ENCODE measurements at regions of chr3 and their contacts with region 1.

Region 1: GRCh38 chr3:57179580-57180410 is 14.6 kb upstream of the IL17RD start:
- DNase-seq: no peak
- H3K4me3 Mint-ChIP-seq: no peak overlapping the region
- H3K27ac Mint-ChIP-seq: no peak overlapping the region
- H3K4me1 Mint-ChIP-seq: no peaks in the 10 kb centered on the region
- H3K27me3 Mint-ChIP-seq: no peaks in the 10 kb centered on the region
- CTCF ChIP-seq: no peak

Region 2: GRCh38 chr3:57331078-57331610 is 151.3 kb after region 1 on chr3:
- CTCF ChIA-PET with region 1: interaction called, 15 read pairs
- intact Hi-C with region 1: no loop called
- DNase-seq: no peak
- H3K4me3 Mint-ChIP-seq: no peak overlapping the region
- H3K27ac Mint-ChIP-seq: no peak overlapping the region
- H3K4me1 Mint-ChIP-seq: no peaks in the 10 kb centered on the region
- H3K27me3 Mint-ChIP-seq: peaks cover 2% of the 10 kb centered on the region
- CTCF ChIP-seq: no peak

Region 3: GRCh38 chr3:57434041-57434440 is 254.2 kb after region 1 on chr3:
- CTCF ChIA-PET with region 1: no interaction called
- intact Hi-C with region 1: no loop called
- DNase-seq: peak; percentile 6
- H3K4me3 Mint-ChIP-seq: no peak overlapping the region
- H3K27ac Mint-ChIP-seq: no peak overlapping the region
- H3K4me1 Mint-ChIP-seq: peaks cover 21% of the 10 kb centered on the region
- H3K27me3 Mint-ChIP-seq: no peaks in the 10 kb centered on the region
- CTCF ChIP-seq: no peak